Activated CD8-positive, alpha-beta T cell treated with anti-CD3 and anti-CD28 coated beads for 36 hours (primary cell): ENCODE measurements at regions of chr19 and their contacts with region 1.

Region 1: GRCh38 chr19:58002384-58003173 is at the start of gene ZNF606:
- DNase-seq: peak; percentile 87
- ATAC-seq: peak; percentile 98
- H3K4me3 Mint-ChIP-seq: peak within 1 kb of the TSS; percentile 84
- H3K27ac Mint-ChIP-seq: peak within 1 kb of the TSS; percentile 89
- H3K4me1 Mint-ChIP-seq: peaks cover 30% of the 10 kb centered on the region
- H3K27me3 Mint-ChIP-seq: no peaks in the 10 kb centered on the region
- CTCF ChIP-seq: no peak
- total RNA-seq, gene ZNF606: 7.5 to 10.0 TPM

Region 2: GRCh38 chr19:57954996-57955395 is 47.6 kb before region 1 on chr19:
- CTCF ChIA-PET with region 1: no interaction called
- POLR2A ChIA-PET with region 1: no interaction called
- intact Hi-C with region 1: loop called (anchors 10 kb)
- DNase-seq: no peak
- ATAC-seq: no peak
- H3K4me3 Mint-ChIP-seq: no peak overlapping the region
- H3K27ac Mint-ChIP-seq: no peak overlapping the region
- H3K4me1 Mint-ChIP-seq: no peaks in the 10 kb centered on the region
- H3K27me3 Mint-ChIP-seq: no peaks in the 10 kb centered on the region
- CTCF ChIP-seq: no peak